ENCODE measurements at regions of chr9 and their contacts with region 1.

Region 1: GRCh38 chr9:121498150-121498486 is 1.5 kb downstream of the GGTA1 start:
- DNase-seq: peak; percentile 31
- H3K4me3 Mint-ChIP-seq: peak overlapping the region; percentile 75
- H3K27ac Mint-ChIP-seq: no peak overlapping the region
- H3K4me1 Mint-ChIP-seq: peaks cover 18% of the 10 kb centered on the region
- H3K27me3 Mint-ChIP-seq: peaks cover 61% of the 10 kb centered on the region

Region 2: GRCh38 chr9:121305269-121305994 is 192.7 kb before region 1 on chr9:
- intact Hi-C with region 1: no loop called
- DNase-seq: no peak
- H3K4me3 Mint-ChIP-seq: no peak overlapping the region
- H3K27ac Mint-ChIP-seq: no peak overlapping the region
- H3K4me1 Mint-ChIP-seq: peaks cover 2% of the 10 kb centered on the region
- H3K27me3 Mint-ChIP-seq: peaks cover 4% of the 10 kb centered on the region

Region 3: GRCh38 chr9:121445981-121446380 is 52.1 kb before region 1 on chr9:
- intact Hi-C with region 1: loop called (anchors 1 kb)
- DNase-seq: no peak
- H3K4me3 Mint-ChIP-seq: no peak overlapping the region
- H3K27ac Mint-ChIP-seq: no peak overlapping the region
- H3K4me1 Mint-ChIP-seq: peaks cover 15% of the 10 kb centered on the region
- H3K27me3 Mint-ChIP-seq: peaks cover 37% of the 10 kb centered on the region

Region 4: GRCh38 chr9:121463026-121463807 is 34.9 kb before region 1 on chr9:
- intact Hi-C with region 1: loop called (anchors 1 kb)
- DNase-seq: no peak
- H3K4me3 Mint-ChIP-seq: no peak overlapping the region
- H3K27ac Mint-ChIP-seq: no peak overlapping the region
- H3K4me1 Mint-ChIP-seq: peaks cover 21% of the 10 kb centered on the region
- H3K27me3 Mint-ChIP-seq: peaks cover 19% of the 10 kb centered on the region

Region 5: GRCh38 chr9:121650217-121651007 is 152.3 kb after region 1 on chr9:
- intact Hi-C with region 1: no loop called
- DNase-seq: no peak
- H3K4me3 Mint-ChIP-seq: no peak overlapping the region
- H3K27ac Mint-ChIP-seq: no peak overlapping the region
- H3K4me1 Mint-ChIP-seq: peaks cover 6% of the 10 kb centered on the region
- H3K27me3 Mint-ChIP-seq: peaks cover 58% of the 10 kb centered on the region

Measured in activated T-helper 1 cell treated with anti-CD3 and anti-CD28 coated beads, Interleukin-12 subunit alpha, Interleukin-12 subunit beta, Interleukin-2, Interleukin-4 antibody, amounts not matched to agents 30 ng/mL and 10 ng/mL and 1 ng/mL, durations not matched to agents 14 hours and 24 hours and 36 hours (primary cell).